Right ventricle myocardium superior (tissue), 1 donor: ENCODE measurements at regions of chr3 and their contacts with region 1.

Region 1: DNA sequence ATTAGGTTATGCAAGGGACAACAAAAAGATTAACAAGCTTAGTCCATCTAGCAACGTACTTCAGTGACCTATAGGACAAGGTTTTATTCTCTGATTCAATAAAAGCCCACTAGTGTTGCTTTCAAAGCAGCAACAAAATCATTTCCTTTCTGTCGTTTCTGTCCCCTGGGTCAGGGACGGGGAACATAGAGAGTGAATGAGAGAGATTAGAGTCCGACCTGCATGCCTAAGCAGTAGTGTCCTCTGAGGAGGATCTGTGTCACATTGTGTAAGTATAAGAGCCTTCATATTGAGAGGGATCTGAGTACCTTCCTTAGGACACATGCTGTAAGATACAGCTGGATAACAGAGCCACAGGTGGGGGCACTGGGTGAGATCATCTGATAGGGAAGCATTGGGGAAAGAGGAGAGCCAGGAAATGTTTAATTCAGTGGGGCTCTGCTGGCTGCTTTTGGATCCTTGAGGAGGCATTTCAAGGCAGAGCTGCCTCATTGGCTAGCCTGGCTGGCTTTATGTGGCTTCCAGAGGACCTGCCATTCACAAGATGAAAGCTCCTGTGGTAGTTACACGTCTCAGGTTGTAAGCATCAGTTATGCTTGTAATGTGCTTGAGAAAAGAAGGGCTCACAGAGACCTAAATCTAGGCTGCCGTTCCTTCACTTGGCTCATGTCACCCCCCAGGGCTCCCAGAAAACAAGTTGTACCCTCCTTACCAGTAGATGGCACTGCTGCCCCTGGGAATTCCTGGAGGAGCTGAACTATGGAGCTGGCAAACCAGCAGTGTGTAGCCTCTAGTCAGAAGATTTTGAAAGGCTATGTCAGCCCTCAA is 2.7 kb downstream of the TMEM108 start:
- DNase-seq: peak; percentile 71
- ATAC-seq: peak; percentile 82

Region 2: DNA sequence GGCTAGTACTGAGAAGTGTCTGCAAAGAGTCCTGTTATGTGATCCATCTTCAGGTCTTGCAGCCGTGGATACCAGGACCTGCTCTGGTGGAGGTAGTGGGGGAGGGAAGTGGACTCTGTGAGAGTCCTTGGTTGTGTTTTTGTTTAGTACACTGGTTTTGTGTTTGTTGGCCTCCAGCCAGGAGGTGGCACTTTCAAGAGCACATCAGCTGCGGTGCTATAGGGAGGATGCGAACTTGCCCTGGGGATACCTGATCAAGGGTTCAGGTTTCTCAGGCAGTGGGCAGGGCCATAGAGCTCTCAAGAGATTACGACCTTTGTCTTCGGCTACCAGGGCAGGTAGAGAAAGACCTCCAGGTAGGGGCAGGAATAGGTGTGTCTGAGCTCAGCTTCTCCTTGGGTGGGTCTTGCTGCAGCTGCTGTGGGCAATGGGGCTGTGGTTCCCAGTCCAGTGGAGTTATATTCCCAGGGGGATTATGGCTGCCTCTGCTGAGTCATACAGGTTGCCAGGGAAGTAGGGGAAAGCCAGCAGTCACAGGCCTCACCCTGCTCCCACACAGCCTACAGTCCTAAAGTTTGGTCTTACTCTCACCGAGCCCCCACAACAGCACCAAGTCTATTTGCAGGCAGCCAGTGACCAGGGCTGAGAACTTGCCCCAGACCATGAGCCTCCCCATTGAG is 185.9 kb before region 1 on chr3:
- intact Hi-C with region 1: no loop called
- DNase-seq: no peak
- ATAC-seq: no peak

Region 3: GRCh38 chr3:133377396-133377795 is 336.5 kb after region 1 on chr3:
- intact Hi-C with region 1: loop called (anchors 2 kb)
- DNase-seq: no peak
- ATAC-seq: peak; percentile 66